ENCODE measurements at regions of chr1 and their contacts with region 1.

Region 1: GRCh38 chr1:51768971-51769588 is 109.4 kb downstream of the NRDC start:
- DNase-seq: peak; percentile 14 to 44 (median 41)
- H3K4me3 ChIP-seq: no peak overlapping the region
- H3K4me3 Mint-ChIP-seq: no peak overlapping the region
- H3K27ac ChIP-seq: no peak overlapping the region
- H3K27ac Mint-ChIP-seq: no peak overlapping the region
- H3K4me1 ChIP-seq: no peaks in the 10 kb centered on the region
- H3K4me1 Mint-ChIP-seq: no peaks in the 10 kb centered on the region
- H3K27me3 ChIP-seq: no peaks in the 10 kb centered on the region
- H3K27me3 Mint-ChIP-seq: no peaks in the 10 kb centered on the region
- CTCF ChIP-seq: peak; percentile 81

Region 2: GRCh38 chr1:51157395-51157794 is 611.7 kb before region 1 on chr1:
- intact Hi-C with region 1: no loop called
- DNase-seq: no peak
- H3K4me3 ChIP-seq: no peak overlapping the region
- H3K4me3 Mint-ChIP-seq: no peak overlapping the region
- H3K27ac ChIP-seq: no peak overlapping the region
- H3K27ac Mint-ChIP-seq: no peak overlapping the region
- H3K4me1 ChIP-seq: no peaks in the 10 kb centered on the region
- H3K4me1 Mint-ChIP-seq: peaks cover 4% of the 10 kb centered on the region
- H3K27me3 ChIP-seq: no peaks in the 10 kb centered on the region
- H3K27me3 Mint-ChIP-seq: peaks cover 0 to 4% (median 2%) of the 10 kb centered on the region in 3 donors
- CTCF ChIP-seq: no peak

Region 3: DNA sequence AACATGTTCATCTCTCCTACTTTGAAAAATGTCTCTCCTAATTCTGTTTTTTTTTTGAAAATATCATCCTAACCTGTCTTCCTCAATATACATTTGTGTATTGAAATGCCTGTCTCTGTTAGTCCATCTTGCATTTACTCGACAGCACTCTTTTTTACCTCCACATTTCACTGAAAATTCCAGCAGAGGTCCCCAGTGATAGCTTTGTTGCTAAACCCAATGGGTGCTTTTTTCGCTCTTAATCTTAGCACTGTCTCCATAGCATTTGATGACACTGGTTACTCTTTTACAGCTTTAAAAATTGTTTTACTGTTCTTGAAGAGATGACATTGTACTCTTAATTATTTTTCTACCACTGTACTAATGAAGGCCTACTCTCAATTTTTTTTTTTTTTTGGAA is 141.4 kb before region 1 on chr1:
- intact Hi-C with region 1: loop called in 1 of 2 experiments (anchors 10 kb)
- DNase-seq: no peak
- H3K4me3 ChIP-seq: no peak overlapping the region
- H3K4me3 Mint-ChIP-seq: no peak overlapping the region
- H3K27ac ChIP-seq: no peak overlapping the region
- H3K27ac Mint-ChIP-seq: peak overlapping the region in 1 of 7 donors; percentile 1
- H3K4me1 ChIP-seq: peaks cover 7 to 16% of the 10 kb centered on the region in 2 donors
- H3K4me1 Mint-ChIP-seq: peaks cover 29% of the 10 kb centered on the region
- H3K27me3 ChIP-seq: no peaks in the 10 kb centered on the region
- H3K27me3 Mint-ChIP-seq: peaks cover 0 to 1% (median 0%) of the 10 kb centered on the region in 3 donors
- CTCF ChIP-seq: no peak

Region 4: DNA sequence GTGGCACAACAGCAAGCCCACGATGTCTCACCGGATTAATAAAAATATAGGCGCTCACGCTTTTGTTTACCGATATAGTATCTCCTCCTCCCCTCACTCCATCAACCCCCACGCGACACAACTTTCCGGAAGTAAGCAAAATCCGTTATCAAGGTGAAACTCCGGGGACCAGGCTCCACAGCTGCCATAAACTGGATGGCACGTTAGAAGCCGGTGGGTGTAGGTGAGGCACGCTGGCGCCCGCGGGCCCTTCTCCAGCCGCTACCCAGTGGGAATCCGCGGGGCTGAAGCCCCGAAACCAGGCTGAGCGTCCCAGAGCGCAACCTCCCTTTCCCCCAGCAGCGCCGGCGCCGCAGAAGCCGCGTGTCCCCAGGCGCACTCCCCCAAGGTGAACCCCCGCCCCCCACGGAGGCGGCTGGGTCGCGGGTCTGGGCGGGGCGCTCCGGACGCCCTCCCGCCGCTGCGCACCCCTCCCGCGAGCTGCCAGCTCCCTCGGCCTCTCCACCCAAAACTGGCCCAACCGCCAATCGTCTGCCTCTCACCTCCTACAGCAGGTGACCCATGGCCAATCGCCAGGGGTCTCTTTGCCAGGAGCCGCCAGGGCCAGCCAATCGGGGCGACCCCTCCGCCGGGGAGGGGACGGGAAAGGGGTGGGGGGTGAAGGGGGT is 39.8 kb before region 1 on chr1:
- intact Hi-C with region 1: no loop called
- DNase-seq: peak; percentile 46 to 70 (median 49)
- H3K4me3 ChIP-seq: peak overlapping the region; percentile 59 to 79 (median 72)
- H3K4me3 Mint-ChIP-seq: peak overlapping the region; percentile 84 to 89
- H3K27ac ChIP-seq: peak overlapping the region in 1 of 2 donors; percentile 35
- H3K27ac Mint-ChIP-seq: peak overlapping the region in 5 of 7 donors; percentile 24 to 78 (median 65)
- H3K4me1 ChIP-seq: peaks cover 30 to 31% of the 10 kb centered on the region in 2 donors
- H3K4me1 Mint-ChIP-seq: peaks cover 41% of the 10 kb centered on the region
- H3K27me3 ChIP-seq: no peaks in the 10 kb centered on the region
- H3K27me3 Mint-ChIP-seq: peaks cover 0 to 1% (median 0%) of the 10 kb centered on the region in 3 donors
- CTCF ChIP-seq: no peak